ENCODE measurements at regions of chr1 and their contacts with region 1.

Region 1: GRCh38 chr1:17661546-17662157 is 93.5 kb upstream of the ACTL8 start:
- DNase-seq: peak; percentile 77 to 89
- ATAC-seq: peak; percentile 34
- H3K4me3 ChIP-seq: no peak overlapping the region
- H3K27ac ChIP-seq: no peak overlapping the region
- H3K4me1 ChIP-seq: no peaks in the 10 kb centered on the region
- H3K27me3 ChIP-seq: no peaks in the 10 kb centered on the region

Region 2: DNA sequence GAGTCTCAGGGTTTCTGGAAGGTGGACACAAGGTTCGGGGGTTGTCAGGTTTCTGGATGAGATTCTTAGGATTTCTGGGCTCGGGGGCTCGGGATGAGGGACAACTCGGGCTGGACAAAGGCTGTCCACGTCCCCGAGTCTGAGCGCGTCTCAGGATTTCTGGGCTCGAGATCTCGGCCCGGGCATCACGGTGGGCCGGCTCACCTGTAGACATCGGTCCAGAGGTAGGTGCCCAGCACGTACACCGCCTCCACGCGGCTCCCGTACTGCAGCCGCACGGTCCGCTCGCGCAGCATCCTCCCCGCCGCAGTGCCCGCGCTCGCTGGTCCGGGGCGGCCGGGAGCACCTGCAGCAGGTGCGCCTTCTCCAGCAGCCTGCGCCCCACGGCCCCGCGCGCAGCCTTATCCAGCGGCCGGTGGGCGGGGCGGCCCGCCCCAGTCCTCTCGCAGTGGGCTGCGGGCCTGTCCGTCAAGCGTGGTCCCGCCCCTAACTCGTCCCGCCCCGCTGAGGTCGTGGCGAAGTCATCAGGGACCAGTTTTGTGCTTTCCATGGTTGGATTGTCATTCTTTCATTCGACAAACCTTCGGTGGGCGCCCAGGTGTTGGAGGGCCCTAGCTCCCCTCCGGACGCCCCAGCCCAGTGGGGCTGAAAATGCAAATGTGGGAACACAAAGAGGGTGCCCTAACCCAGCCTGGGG is 542.4 kb before region 1 on chr1 and contains the start of gene PADI2:
- intact Hi-C with region 1: no loop called
- DNase-seq: peak; percentile 84 to 86
- ATAC-seq: peak; percentile 73
- H3K4me3 ChIP-seq: no peak within 1 kb of the TSS
- H3K27ac ChIP-seq: no peak within 1 kb of the TSS
- H3K4me1 ChIP-seq: no peaks in the 10 kb centered on the region
- H3K27me3 ChIP-seq: no peaks in the 10 kb centered on the region
- total RNA-seq, gene PADI2: 1.8 to 2.2 TPM

Region 3: GRCh38 chr1:17439250-17440073 is 222.2 kb before region 1 on chr1 and contains the start of gene RCC2:
- intact Hi-C with region 1: loop called in 1 of 2 experiments (anchors 10 kb)
- DNase-seq: peak; percentile 81 to 90
- ATAC-seq: peak; percentile 83
- H3K4me3 ChIP-seq: peak within 1 kb of the TSS; percentile 84 to 99
- H3K27ac ChIP-seq: peak within 1 kb of the TSS in 1 of 2 donors; percentile 70
- H3K4me1 ChIP-seq: no peaks in the 10 kb centered on the region
- H3K27me3 ChIP-seq: no peaks in the 10 kb centered on the region
- total RNA-seq, gene RCC2: 22.3 to 34.2 TPM

Region 4: DNA sequence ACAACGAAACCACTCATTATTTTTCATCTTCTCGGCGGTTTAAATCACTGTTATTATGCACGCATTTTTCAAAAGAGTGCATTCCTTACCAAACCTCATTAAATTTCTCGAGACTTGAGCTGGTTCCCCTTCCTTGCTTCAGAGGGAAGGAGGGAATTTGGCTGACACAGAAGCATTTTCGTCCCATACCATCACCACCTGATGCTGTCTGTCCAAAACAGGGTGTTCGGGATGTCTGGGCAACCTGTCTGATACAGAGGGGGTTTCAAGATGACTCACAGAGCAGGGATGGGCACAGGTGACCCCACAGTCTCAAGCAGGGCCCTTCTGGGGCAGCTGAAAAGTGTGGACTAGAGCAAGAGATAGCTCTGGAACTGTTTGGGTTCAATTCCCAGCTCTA is 209.9 kb before region 1 on chr1:
- intact Hi-C with region 1: no loop called
- DNase-seq: no peak
- ATAC-seq: no peak
- H3K4me3 ChIP-seq: no peak overlapping the region
- H3K27ac ChIP-seq: no peak overlapping the region
- H3K4me1 ChIP-seq: no peaks in the 10 kb centered on the region
- H3K27me3 ChIP-seq: no peaks in the 10 kb centered on the region

Region 5: DNA sequence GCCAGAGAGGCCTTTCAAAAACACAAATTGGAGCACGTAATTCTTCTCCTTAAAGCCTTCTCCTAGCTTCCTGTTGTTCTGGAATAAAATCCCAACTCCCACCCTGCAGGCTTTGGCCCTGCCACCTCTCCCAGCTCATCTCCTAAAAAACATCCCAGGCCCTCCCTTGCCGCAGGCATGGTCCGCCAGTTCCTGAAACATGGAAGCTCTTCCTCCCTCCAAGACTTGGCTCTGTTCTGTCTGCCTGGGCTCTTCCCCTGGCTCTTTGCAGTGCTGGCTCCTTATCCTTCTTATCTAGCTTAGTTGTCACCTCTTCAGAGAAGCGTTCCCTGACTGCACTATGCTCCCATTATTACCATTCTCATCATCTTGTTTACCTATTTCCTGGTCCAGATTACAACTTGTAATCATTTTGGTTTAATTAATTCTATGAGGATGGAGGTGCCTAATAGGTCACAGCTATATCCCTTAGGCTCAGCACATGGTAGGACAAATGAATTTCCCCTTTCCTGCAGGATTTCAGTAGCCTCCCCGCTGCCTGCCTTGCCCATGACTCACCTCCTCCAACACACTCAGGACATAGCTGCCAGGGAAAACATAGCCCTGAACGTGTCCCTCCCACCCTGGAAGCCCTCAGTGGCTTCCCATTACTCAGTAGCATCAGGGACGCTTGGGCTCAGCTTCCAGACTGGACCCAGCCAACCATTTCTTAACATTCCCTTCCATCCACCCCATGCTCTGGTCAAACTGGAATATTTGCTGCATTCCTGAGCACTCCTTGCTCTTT is 430.2 kb after region 1 on chr1:
- intact Hi-C with region 1: loop called in 1 of 2 experiments (anchors 10 kb)
- DNase-seq: peak; percentile 74 to 84
- ATAC-seq: peak; percentile 71
- H3K4me3 ChIP-seq: no peak overlapping the region
- H3K27ac ChIP-seq: no peak overlapping the region
- H3K4me1 ChIP-seq: peaks cover 0 to 3% of the 10 kb centered on the region in 2 donors
- H3K27me3 ChIP-seq: no peaks in the 10 kb centered on the region

Measured in aorta (tissue), 5 donors.